ENCODE measurements at regions of chr1 and their contacts with region 1.

Region 1: GRCh38 chr1:225454733-225455132 is 26.9 kb upstream of the LBR start:
- DNase-seq: peak; percentile 61
- ATAC-seq: peak; percentile 93
- H3K4me3 ChIP-seq: no peak overlapping the region
- H3K27ac ChIP-seq: no peak overlapping the region
- H3K4me1 ChIP-seq: peaks cover 7% of the 10 kb centered on the region; the same call in 1 of the 2 replicates
- H3K27me3 ChIP-seq: no peaks in the 10 kb centered on the region
- CTCF ChIP-seq: no peak

Region 2: GRCh38 chr1:225049594-225049993 is 405.1 kb before region 1 on chr1:
- CTCF ChIA-PET with region 1: no interaction called
- POLR2A ChIA-PET with region 1: no interaction called
- in situ Hi-C with region 1: no loop called
- intact Hi-C with region 1: no loop called
- DNase-seq: no peak
- ATAC-seq: no peak
- H3K4me3 ChIP-seq: no peak overlapping the region
- H3K27ac ChIP-seq: no peak overlapping the region
- H3K4me1 ChIP-seq: no peaks in the 10 kb centered on the region
- H3K27me3 ChIP-seq: no peaks in the 10 kb centered on the region
- CTCF ChIP-seq: no peak

Region 3: GRCh38 chr1:225396357-225396756 is 58.4 kb before region 1 on chr1:
- CTCF ChIA-PET with region 1: no interaction called
- POLR2A ChIA-PET with region 1: no interaction called
- in situ Hi-C with region 1: no loop called
- intact Hi-C with region 1: no loop called
- DNase-seq: no peak
- ATAC-seq: no peak
- H3K4me3 ChIP-seq: no peak overlapping the region
- H3K27ac ChIP-seq: no peak overlapping the region
- H3K4me1 ChIP-seq: no peaks in the 10 kb centered on the region
- H3K27me3 ChIP-seq: no peaks in the 10 kb centered on the region
- CTCF ChIP-seq: no peak

Region 4: GRCh38 chr1:225413708-225414375 is 40.9 kb before region 1 on chr1:
- CTCF ChIA-PET with region 1: no interaction called
- POLR2A ChIA-PET with region 1: no interaction called
- in situ Hi-C with region 1: no loop called
- intact Hi-C with region 1: no loop called
- DNase-seq: no peak
- ATAC-seq: no peak
- H3K4me3 ChIP-seq: no peak overlapping the region
- H3K27ac ChIP-seq: no peak overlapping the region
- H3K4me1 ChIP-seq: no peaks in the 10 kb centered on the region
- H3K27me3 ChIP-seq: no peaks in the 10 kb centered on the region
- CTCF ChIP-seq: no peak; the same call in 1 of the 2 replicates

Region 5: GRCh38 chr1:225441314-225442122 is 13.2 kb before region 1 on chr1:
- CTCF ChIA-PET with region 1: interaction called, 12 read pairs
- POLR2A ChIA-PET with region 1: no interaction called
- in situ Hi-C with region 1: no loop called
- intact Hi-C with region 1: no loop called
- DNase-seq: no peak
- ATAC-seq: no peak
- H3K4me3 ChIP-seq: no peak overlapping the region
- H3K27ac ChIP-seq: no peak overlapping the region
- H3K4me1 ChIP-seq: no peaks in the 10 kb centered on the region
- H3K27me3 ChIP-seq: no peaks in the 10 kb centered on the region
- CTCF ChIP-seq: peak; percentile 50; the same call in 1 of the 2 replicates

Measured in Panc1 (cell line).